CD4-positive, alpha-beta memory T cell (primary cell): ENCODE measurements at regions of chr5 and their contacts with region 1.

Region 1: DNA sequence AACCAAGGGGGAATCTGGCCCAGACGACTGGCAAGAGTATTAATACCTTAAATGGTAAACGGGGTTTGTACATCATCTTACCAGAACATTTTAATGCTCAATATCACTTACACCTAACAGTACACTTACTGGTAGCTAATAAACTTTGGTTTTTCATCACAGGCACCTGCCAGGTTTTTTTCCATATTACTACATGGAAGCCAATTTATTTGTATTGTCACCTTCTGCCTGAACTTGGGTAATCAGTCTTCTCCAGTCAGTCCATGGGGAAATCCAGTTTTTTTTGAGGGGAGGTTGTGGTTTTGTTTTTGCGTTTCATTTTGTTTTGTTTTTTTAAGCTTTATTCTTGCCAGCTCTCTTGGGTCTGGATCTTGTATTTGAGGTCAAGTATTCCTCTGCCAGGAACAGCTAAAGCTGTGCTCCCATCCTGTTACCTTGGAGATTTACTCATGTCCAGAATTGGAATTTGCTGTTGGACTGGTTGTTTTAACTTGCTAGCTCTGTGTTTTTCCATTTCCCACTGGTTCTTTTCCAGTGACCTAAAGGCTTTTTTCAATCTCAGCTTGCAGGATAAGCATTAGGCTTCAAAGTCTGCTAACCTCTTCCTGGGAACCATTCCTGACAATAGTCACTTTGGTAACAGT is 11.1 kb upstream of the NADK2 start:
- DNase-seq: no peak
- H3K4me3 ChIP-seq: no peak overlapping the region
- H3K4me3 Mint-ChIP-seq: no peak overlapping the region
- H3K27ac ChIP-seq: no peak overlapping the region
- H3K27ac Mint-ChIP-seq: no peak overlapping the region
- H3K4me1 ChIP-seq: no peaks in the 10 kb centered on the region
- H3K4me1 Mint-ChIP-seq: no peaks in the 10 kb centered on the region
- H3K27me3 ChIP-seq: no peaks in the 10 kb centered on the region
- H3K27me3 Mint-ChIP-seq: peaks cover 6 to 18% of the 10 kb centered on the region in 2 donors

Region 2: DNA sequence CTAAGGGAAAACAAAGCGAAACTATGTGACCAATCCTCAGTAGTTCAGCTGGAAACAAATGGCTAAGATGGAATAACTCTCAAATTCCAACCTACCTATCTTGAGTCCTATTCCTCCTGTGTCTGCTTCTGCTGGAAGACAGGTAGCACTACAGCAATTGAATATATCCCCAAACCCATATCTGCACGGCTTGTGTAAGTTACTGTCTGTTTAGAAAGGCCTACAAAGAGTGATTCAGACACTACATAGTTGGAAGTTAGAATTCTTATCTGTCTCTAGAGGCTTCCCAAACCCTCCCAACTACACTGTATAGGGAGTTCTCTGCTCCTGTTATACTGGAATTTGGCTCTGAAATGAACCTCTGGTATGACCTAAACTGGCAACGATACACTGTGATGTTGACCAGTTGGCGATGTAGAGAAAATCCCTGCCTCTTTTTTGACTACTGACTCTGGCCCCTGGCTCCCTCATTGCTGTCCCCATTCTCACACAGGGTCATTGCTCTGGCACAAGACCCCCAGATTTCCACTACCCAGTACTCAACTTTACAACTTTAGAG is 11.4 kb after region 1 on chr5:
- CTCF ChIA-PET with region 1: interaction called, 11 read pairs
- POLR2A ChIA-PET with region 1: no interaction called
- intact Hi-C with region 1: no loop called
- DNase-seq: no peak
- H3K4me3 ChIP-seq: no peak overlapping the region
- H3K4me3 Mint-ChIP-seq: no peak overlapping the region
- H3K27ac ChIP-seq: no peak overlapping the region
- H3K27ac Mint-ChIP-seq: no peak overlapping the region
- H3K4me1 ChIP-seq: no peaks in the 10 kb centered on the region
- H3K4me1 Mint-ChIP-seq: no peaks in the 10 kb centered on the region
- H3K27me3 ChIP-seq: no peaks in the 10 kb centered on the region
- H3K27me3 Mint-ChIP-seq: peaks cover 23 to 29% of the 10 kb centered on the region in 2 donors